ENCODE measurements at regions of chr11 and their contacts with region 1.

Region 1: GRCh38 chr11:96389720-96390487 is at the starts of genes CCDC82 and JRKL:
- DNase-seq: peak; percentile 99
- H3K4me3 Mint-ChIP-seq: peak within 1 kb of the TSS; percentile 86
- H3K27ac Mint-ChIP-seq: peak within 1 kb of the TSS; percentile 93
- H3K4me1 Mint-ChIP-seq: peaks cover 59% of the 10 kb centered on the region
- H3K27me3 Mint-ChIP-seq: no peaks in the 10 kb centered on the region

Region 2: DNA sequence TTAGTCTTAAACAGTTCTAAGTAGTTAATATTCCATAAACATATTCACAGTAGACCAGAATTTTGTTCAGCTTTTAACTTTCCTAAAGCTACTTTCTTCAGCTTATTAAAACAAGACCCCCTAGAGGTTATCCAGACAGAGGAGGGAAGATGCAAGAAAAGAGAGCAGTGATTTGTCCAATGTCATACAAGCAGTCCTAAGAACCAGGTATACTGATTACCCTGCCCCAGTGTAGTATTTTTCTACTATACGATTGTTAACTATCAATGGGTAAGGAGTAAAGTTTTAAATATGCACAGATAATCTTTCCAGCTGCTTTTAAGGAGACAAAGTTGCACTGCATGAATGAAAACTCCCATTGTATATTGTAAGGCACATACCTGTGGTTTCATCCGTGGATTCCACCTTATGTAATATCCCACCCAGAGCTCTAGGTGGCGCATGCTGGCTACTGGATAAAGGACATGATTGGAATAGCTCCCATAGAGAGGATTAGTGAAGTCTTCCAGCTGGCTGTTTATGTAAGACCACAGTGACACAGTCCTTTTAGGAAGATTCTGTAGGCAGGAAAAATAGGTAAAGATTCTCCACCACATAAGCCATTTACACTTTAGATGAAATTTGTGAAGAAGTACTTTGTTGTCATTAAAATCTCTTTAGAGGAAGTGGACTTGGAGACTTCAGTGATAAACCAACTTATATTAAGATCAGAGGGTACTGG is 554.0 kb before region 1 on chr11:
- CTCF ChIA-PET with region 1: interaction called, 31 read pairs
- DNase-seq: peak; percentile 68
- H3K4me3 Mint-ChIP-seq: no peak overlapping the region
- H3K27ac Mint-ChIP-seq: no peak overlapping the region
- H3K4me1 Mint-ChIP-seq: no peaks in the 10 kb centered on the region
- H3K27me3 Mint-ChIP-seq: no peaks in the 10 kb centered on the region

Region 3: GRCh38 chr11:95849087-95849825 is 540.6 kb before region 1 on chr11:
- CTCF ChIA-PET with region 1: interaction called, 29 read pairs
- DNase-seq: peak; percentile 43
- H3K4me3 Mint-ChIP-seq: no peak overlapping the region
- H3K27ac Mint-ChIP-seq: no peak overlapping the region
- H3K4me1 Mint-ChIP-seq: no peaks in the 10 kb centered on the region
- H3K27me3 Mint-ChIP-seq: no peaks in the 10 kb centered on the region

Region 4: GRCh38 chr11:96054870-96055705 is 334.8 kb before region 1 on chr11:
- CTCF ChIA-PET with region 1: interaction called, 10 read pairs
- DNase-seq: no peak
- H3K4me3 Mint-ChIP-seq: no peak overlapping the region
- H3K27ac Mint-ChIP-seq: no peak overlapping the region
- H3K4me1 Mint-ChIP-seq: peaks cover 32% of the 10 kb centered on the region
- H3K27me3 Mint-ChIP-seq: no peaks in the 10 kb centered on the region

Region 5: GRCh38 chr11:96098514-96099241 is 291.2 kb before region 1 on chr11:
- CTCF ChIA-PET with region 1: no interaction called
- DNase-seq: no peak
- H3K4me3 Mint-ChIP-seq: no peak overlapping the region
- H3K27ac Mint-ChIP-seq: no peak overlapping the region
- H3K4me1 Mint-ChIP-seq: peaks cover 2% of the 10 kb centered on the region
- H3K27me3 Mint-ChIP-seq: no peaks in the 10 kb centered on the region

Measured in activated naive CD4-positive, alpha-beta T cell treated with anti-CD3 and anti-CD28 coated beads, Interleukin-2, amount 10 ng/mL, durations not matched to agents 7 days and 5 days (primary cell).